Posterior vena cava (tissue), 2 donors: ENCODE measurements at regions of chr2 and their contacts with region 1.

Region 1: GRCh38 chr2:154974041-154974440 is 275.5 kb downstream of the KCNJ3 start:
- DNase-seq: no peak

Region 2: DNA sequence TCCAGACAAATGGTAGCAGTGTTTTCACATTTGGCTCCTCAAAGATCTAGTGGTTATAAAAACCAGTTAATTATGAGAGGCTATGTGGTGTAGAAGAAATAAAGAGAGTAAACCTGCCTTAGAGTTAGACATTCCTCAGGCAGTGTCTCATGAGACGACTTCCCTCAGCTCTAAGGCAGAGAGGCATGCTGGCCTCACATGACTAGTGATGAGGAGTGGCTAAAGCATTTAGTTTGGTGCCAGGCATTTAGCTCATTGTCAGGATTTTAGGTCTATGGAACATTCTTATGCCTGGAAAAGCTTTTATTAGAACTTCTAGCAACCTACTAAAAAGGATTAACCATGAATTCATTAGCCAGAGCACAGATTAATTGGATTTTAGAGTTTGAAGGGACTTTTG is 1585.8 kb before region 1 on chr2:
- intact Hi-C with region 1: loop called in 1 of 2 experiments (anchors 10 kb)
- DNase-seq: no peak